ENCODE measurements at regions of chr10 and their contacts with region 1.

Region 1: DNA sequence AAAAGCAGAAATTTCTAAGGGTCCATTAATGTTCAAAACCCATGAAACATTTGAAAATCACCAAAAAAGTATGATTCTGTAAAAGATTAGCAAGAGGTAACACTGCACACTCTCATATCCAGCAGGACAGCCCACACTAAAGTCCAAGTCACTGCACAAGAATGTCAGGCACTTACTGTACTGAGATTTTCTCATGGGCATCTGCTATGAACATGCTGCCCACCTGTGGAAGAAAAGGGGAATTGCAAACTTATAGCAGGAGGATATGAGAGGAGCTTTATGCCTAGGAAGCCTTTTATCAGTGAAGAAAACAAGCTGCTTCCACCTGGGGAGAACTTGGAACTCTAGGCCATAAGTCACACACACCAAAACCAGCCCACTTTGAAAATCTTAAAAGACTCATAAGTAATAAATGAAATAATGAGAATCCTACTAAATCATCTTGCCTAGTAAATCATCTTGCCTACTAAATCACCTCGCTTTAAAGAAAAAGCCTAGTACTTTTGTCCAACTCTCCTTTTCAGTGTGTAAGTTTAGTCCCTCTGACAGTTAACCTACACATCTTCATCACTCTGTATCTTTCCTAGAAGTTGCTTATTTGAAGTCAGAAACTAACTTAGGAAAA is 46.1 kb downstream of the ARMH3 start:
- DNase-seq: peak; percentile 31
- ATAC-seq: peak; percentile 96
- H3K4me3 Mint-ChIP-seq: no peak overlapping the region
- H3K27ac Mint-ChIP-seq: peak overlapping the region; percentile 1; the same call in 1 of the 2 replicates
- H3K4me1 Mint-ChIP-seq: peaks cover 21% of the 10 kb centered on the region
- H3K27me3 Mint-ChIP-seq: no peaks in the 10 kb centered on the region
- CTCF ChIP-seq: peak; percentile 53

Region 2: GRCh38 chr10:101818119-101818871 is 191.6 kb before region 1 on chr10 and contains the start of gene OGA:
- CTCF ChIA-PET with region 1: interaction called, 15 read pairs
- POLR2A ChIA-PET with region 1: no interaction called
- DNase-seq: peak; percentile 98
- ATAC-seq: peak; percentile 91
- H3K4me3 Mint-ChIP-seq: peak within 1 kb of the TSS; percentile 88
- H3K27ac Mint-ChIP-seq: peak within 1 kb of the TSS; percentile 98
- H3K4me1 Mint-ChIP-seq: peaks cover 26% of the 10 kb centered on the region
- H3K27me3 Mint-ChIP-seq: no peaks in the 10 kb centered on the region
- CTCF ChIP-seq: no peak
- total RNA-seq, gene OGA: 110 to 111 TPM (median 110 TPM) in 3 replicates

Region 3: DNA sequence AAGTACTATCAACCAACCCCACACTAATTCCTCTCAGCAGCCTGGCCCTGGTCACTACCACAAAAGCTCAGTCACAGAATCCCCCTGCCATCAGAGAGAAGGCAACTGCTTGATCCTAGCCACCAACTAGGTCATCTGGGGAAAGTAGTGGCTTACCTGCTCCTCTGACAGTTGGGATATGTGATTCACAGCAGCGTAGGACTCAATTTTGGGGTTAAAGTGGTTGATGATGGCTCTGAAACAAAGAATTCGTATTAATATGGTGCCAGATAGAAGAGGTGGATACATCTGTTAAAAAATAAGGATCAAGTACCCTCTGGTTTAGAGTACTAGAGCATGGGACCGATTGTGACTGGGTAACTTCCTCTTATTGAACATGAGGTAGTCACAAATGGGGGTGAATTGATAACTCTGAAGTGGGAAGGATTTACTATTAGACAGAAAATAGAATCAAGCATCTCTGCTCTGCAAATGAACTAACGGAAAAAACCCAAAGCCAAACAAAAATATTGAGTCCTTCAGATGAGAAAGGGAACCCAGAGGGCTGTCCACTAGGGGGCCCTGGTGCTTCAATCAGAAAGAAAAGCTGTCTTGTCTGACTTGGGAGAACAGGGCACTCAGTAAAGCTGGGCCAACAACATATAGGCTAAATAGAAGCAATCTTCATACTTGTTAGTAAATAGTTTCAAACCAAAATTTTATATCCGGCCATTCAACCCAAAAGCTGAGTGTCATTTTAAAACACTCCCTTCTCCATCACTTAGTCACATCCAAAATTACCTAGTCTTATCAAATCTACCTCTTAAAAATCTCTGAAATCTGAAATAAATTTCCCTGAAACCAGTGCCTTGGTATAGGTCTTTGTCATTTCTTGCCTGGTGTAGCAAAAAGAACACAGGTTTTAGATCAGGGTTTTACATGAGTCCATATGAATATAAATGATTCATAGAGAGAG is 120.4 kb before region 1 on chr10:
- CTCF ChIA-PET with region 1: interaction called, 147 read pairs
- POLR2A ChIA-PET with region 1: no interaction called
- DNase-seq: peak; percentile 90
- ATAC-seq: peak; percentile 91
- H3K4me3 Mint-ChIP-seq: no peak overlapping the region
- H3K27ac Mint-ChIP-seq: no peak overlapping the region
- H3K4me1 Mint-ChIP-seq: no peaks in the 10 kb centered on the region
- H3K27me3 Mint-ChIP-seq: no peaks in the 10 kb centered on the region
- CTCF ChIP-seq: peak; percentile 75; the same call in 1 of the 2 replicates

Region 4: GRCh38 chr10:101961591-101962498 is 48.1 kb before region 1 on chr10:
- CTCF ChIA-PET with region 1: interaction called, 20 read pairs
- POLR2A ChIA-PET with region 1: no interaction called
- DNase-seq: no peak
- ATAC-seq: no peak
- H3K4me3 Mint-ChIP-seq: no peak overlapping the region
- H3K27ac Mint-ChIP-seq: no peak overlapping the region
- H3K4me1 Mint-ChIP-seq: no peaks in the 10 kb centered on the region
- H3K27me3 Mint-ChIP-seq: no peaks in the 10 kb centered on the region
- CTCF ChIP-seq: no peak

Region 5: DNA sequence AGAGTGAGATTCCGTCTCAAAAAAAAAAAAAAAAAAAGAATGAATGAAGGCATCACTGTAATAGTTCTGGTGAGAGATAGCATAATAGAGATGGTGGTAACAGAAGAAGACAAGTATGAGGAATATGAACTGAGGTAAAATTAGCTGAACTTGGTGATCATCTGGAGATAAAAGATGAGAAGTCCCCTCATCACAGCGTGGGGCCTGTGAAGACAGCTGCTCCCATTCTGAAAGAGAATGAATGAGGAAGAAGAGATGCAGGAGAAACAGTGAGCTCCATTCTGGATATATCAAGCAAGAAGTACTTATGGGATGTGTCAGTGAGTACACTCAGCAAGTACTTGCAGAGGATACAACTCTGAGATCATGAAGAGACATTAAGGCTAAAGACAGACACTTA is 17.3 kb after region 1 on chr10:
- CTCF ChIA-PET with region 1: interaction called, 13 read pairs
- POLR2A ChIA-PET with region 1: no interaction called
- DNase-seq: no peak
- ATAC-seq: no peak
- H3K4me3 Mint-ChIP-seq: no peak overlapping the region
- H3K27ac Mint-ChIP-seq: no peak overlapping the region
- H3K4me1 Mint-ChIP-seq: peaks cover 7% of the 10 kb centered on the region
- H3K27me3 Mint-ChIP-seq: no peaks in the 10 kb centered on the region
- CTCF ChIP-seq: no peak

Region 6: DNA sequence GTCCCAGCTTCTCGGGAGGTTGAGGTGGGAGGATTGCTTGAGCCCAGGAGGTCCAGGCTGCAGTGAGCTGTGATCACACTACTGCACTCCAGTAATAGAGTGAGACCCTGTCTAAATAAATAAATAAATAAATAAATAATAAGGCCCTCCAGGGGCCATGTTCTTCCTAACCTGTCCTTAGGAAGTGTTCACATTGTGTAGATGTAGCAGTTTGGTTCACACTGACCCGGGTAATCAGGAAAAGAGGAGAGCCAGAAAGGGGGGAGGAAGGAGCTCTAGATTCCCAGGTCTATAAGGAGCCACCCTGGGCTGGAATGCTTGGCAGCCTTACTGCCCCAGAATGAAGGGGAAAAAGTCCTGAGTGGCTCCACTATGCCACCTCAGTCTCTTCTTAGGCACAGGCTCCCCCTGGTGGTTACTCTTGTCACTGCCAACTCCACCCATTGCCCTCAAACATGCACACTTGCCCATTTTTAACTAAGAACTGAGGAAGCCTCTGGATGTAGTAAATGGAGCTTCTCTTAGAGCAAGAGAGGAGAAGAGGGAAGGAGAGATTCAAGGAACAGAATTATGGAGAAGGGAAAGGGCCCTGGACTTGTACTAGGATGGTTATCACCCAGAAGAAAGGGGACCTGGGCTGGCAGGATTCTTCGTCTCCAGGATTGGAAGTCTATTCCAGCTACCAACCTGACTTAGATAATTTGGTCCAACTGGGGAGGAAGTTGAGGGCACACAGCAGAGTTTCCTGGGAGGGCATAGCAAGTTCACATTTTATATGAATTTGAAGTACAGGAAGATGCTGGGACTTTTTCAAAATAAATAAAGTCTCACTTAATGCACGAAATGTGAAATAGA is 63.0 kb after region 1 on chr10:
- CTCF ChIA-PET with region 1: interaction called, 39 read pairs
- POLR2A ChIA-PET with region 1: no interaction called
- DNase-seq: peak; percentile 85
- ATAC-seq: peak; percentile 95
- H3K4me3 Mint-ChIP-seq: no peak overlapping the region
- H3K27ac Mint-ChIP-seq: no peak overlapping the region
- H3K4me1 Mint-ChIP-seq: no peaks in the 10 kb centered on the region
- H3K27me3 Mint-ChIP-seq: peaks cover 3% of the 10 kb centered on the region
- CTCF ChIP-seq: peak; percentile 94

Region 7: GRCh38 chr10:102225646-102226541 is 216.0 kb after region 1 on chr10 and contains the start of gene ELOVL3:
- CTCF ChIA-PET with region 1: no interaction called
- POLR2A ChIA-PET with region 1: no interaction called
- DNase-seq: peak; percentile 96
- ATAC-seq: peak; percentile 92
- H3K4me3 Mint-ChIP-seq: peak within 1 kb of the TSS; percentile 56
- H3K27ac Mint-ChIP-seq: no peak within 1 kb of the TSS
- H3K4me1 Mint-ChIP-seq: peaks cover 8% of the 10 kb centered on the region; the same call in 1 of the 2 replicates
- H3K27me3 Mint-ChIP-seq: peaks cover 96% of the 10 kb centered on the region
- CTCF ChIP-seq: no peak
- total RNA-seq, gene ELOVL3: 0.17 to 0.46 TPM (median 0.34 TPM) in 3 replicates

Measured in WTC11 (cell line).